Naive thymus-derived CD4-positive, alpha-beta T cell (primary cell): ENCODE measurements at regions of chr1 and their contacts with region 1.

Region 1: DNA sequence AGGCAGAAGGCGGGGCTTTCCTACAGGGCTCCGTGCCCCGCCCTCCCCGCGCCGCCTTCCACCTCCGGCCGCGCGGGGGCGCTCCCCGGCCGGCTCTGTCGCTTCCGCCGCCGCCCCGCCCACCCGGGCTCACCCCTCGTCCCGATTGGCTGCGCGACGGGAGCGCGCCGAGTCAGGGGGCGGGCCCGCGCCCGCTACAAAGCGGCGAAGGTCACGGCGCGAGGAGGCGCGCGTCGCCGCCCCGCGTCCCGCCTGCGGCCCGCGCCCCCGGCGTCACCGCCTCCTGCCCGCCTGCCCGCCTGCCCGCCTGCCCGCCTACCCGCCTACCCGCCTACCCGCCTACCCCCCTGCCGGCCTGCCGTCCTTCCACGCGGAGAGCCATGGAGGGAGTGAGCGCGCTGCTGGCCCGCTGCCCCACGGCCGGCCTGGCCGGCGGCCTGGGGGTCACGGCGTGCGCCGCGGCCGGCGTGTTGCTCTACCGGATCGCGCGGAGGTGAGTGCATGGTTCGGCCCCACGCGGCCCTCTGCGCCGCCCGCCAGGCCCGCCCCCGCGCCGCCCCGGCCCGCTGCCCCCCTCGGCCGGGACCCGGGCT is at the start of gene TMEM201:
- DNase-seq: peak; percentile 88 to 98 (median 93)
- ATAC-seq: peak; percentile 98
- H3K4me3 ChIP-seq: peak within 1 kb of the TSS; percentile 51
- H3K4me3 Mint-ChIP-seq: peak within 1 kb of the TSS; percentile 78 to 93 (median 86)
- H3K27ac ChIP-seq: peak within 1 kb of the TSS; percentile 69
- H3K27ac Mint-ChIP-seq: peak within 1 kb of the TSS; percentile 43 to 93 (median 65)
- H3K4me1 ChIP-seq: peaks cover 11 to 22% of the 10 kb centered on the region in 2 donors
- H3K4me1 Mint-ChIP-seq: peaks cover 20 to 37% (median 32%) of the 10 kb centered on the region in 7 donors
- H3K27me3 ChIP-seq: no peaks in the 10 kb centered on the region
- H3K27me3 Mint-ChIP-seq: no peaks in the 10 kb centered on the region
- total RNA-seq, gene TMEM201: 9.0 to 18.5 (median 10.0) TPM

Region 2: DNA sequence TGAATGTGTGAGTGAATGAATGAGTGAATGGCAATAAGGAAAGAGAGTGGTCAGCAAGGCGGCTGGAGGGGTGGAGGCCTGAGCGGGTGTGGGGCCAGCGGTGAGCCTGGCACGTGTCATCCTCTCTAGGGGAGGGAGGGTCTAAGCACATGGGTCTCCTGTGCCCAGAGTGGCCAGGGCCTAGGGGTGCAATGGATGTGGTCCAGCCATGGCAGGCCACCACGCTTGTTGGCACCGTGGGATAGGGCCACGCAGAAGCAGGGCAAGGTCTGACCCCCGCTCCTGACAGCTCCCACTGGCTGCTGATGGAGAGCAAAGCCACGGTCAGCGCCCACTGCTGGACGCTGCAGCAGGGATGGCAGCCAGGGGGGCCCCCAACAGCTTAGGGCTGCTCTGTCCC is 315.5 kb before region 1 on chr1:
- CTCF ChIA-PET with region 1: no interaction called
- POLR2A ChIA-PET with region 1: no interaction called
- intact Hi-C with region 1: no loop called
- DNase-seq: no peak
- ATAC-seq: no peak
- H3K4me3 ChIP-seq: no peak overlapping the region
- H3K4me3 Mint-ChIP-seq: no peak overlapping the region
- H3K27ac ChIP-seq: no peak overlapping the region
- H3K27ac Mint-ChIP-seq: no peak overlapping the region
- H3K4me1 ChIP-seq: peaks cover 0 to 11% of the 10 kb centered on the region in 2 donors
- H3K4me1 Mint-ChIP-seq: peaks cover 0 to 17% (median 0%) of the 10 kb centered on the region in 7 donors
- H3K27me3 ChIP-seq: no peaks in the 10 kb centered on the region
- H3K27me3 Mint-ChIP-seq: no peaks in the 10 kb centered on the region

Region 3: GRCh38 chr1:9292361-9293240 is 296.0 kb before region 1 on chr1 and contains the start of gene SPSB1:
- CTCF ChIA-PET with region 1: no interaction called
- POLR2A ChIA-PET with region 1: no interaction called
- intact Hi-C with region 1: loop called (anchors 5 to 10 kb)
- DNase-seq: peak; percentile 30 to 66 (median 56)
- ATAC-seq: peak; percentile 81
- H3K4me3 ChIP-seq: peak within 1 kb of the TSS; percentile 55
- H3K4me3 Mint-ChIP-seq: peak within 1 kb of the TSS; percentile 34 to 86 (median 66)
- H3K27ac ChIP-seq: peak within 1 kb of the TSS; percentile 27
- H3K27ac Mint-ChIP-seq: peak within 1 kb of the TSS in 8 of 9 donors; percentile 21 to 81 (median 52)
- H3K4me1 ChIP-seq: peaks cover 6 to 19% of the 10 kb centered on the region in 2 donors
- H3K4me1 Mint-ChIP-seq: peaks cover 6 to 40% (median 32%) of the 10 kb centered on the region in 7 donors
- H3K27me3 ChIP-seq: no peaks in the 10 kb centered on the region
- H3K27me3 Mint-ChIP-seq: no peaks in the 10 kb centered on the region
- total RNA-seq, gene SPSB1: 1.8 to 10.3 (median 1.9) TPM

Region 4: DNA sequence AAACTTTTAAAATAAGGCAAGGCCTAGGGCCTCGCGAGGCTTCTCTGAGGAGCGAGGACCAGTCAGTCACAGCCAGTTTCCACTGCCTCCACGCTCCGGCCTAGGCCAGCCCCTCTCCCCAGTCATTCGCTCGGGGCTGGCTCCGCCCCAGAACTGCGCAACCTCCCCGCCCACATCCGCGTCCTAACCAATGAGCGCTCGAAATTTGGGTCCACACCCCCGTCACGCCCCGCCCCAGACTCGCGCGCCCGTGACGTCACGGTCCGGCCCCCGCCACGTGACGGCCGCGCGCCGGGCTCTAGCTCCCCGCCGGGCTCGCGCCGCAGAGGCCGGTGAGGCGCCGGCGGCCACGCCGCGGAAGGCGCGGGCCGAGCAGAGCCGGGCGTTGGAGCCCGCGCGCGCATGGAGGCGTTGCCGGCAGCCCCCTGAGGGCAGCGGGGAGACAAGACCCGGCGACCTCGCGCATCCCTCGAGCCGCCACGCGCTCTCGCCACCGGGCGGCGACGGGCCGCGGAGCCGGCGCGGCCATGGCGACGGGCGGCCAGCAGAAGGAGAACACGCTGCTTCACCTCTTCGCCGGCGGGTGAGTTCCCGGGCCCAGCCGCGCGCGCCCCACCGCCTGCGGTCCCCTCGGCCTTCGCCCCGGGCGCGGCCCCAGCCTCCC is 49.4 kb before region 1 on chr1 and contains the start of gene SLC25A33:
- CTCF ChIA-PET with region 1: no interaction called
- POLR2A ChIA-PET with region 1: interaction called, 3 read pairs
- intact Hi-C with region 1: loop called (anchors 1 kb)
- DNase-seq: peak; percentile 92 to 99 (median 95)
- ATAC-seq: peak; percentile 99
- H3K4me3 ChIP-seq: peak within 1 kb of the TSS; percentile 58
- H3K4me3 Mint-ChIP-seq: peak within 1 kb of the TSS; percentile 86 to 93 (median 90)
- H3K27ac ChIP-seq: peak within 1 kb of the TSS; percentile 73
- H3K27ac Mint-ChIP-seq: peak within 1 kb of the TSS; percentile 85 to 97 (median 91)
- H3K4me1 ChIP-seq: peaks cover 5 to 8% of the 10 kb centered on the region in 2 donors
- H3K4me1 Mint-ChIP-seq: peaks cover 18 to 38% (median 31%) of the 10 kb centered on the region in 7 donors
- H3K27me3 ChIP-seq: no peaks in the 10 kb centered on the region
- H3K27me3 Mint-ChIP-seq: no peaks in the 10 kb centered on the region
- total RNA-seq, gene SLC25A33: 2.5 to 5.8 (median 3.9) TPM

Region 5: GRCh38 chr1:9651565-9652378 is 63.1 kb after region 1 on chr1 and contains the start of gene PIK3CD:
- CTCF ChIA-PET with region 1: no interaction called
- POLR2A ChIA-PET with region 1: no interaction called
- intact Hi-C with region 1: loop called in 1 of 2 experiments (anchors 2 kb)
- DNase-seq: peak in 6 of 9 donors; percentile 14 to 59 (median 32)
- ATAC-seq: peak; percentile 49
- H3K4me3 ChIP-seq: peak within 1 kb of the TSS; percentile 84
- H3K4me3 Mint-ChIP-seq: peak within 1 kb of the TSS; percentile 96 to 100 (median 99)
- H3K27ac ChIP-seq: peak within 1 kb of the TSS; percentile 79
- H3K27ac Mint-ChIP-seq: peak within 1 kb of the TSS; percentile 95 to 99 (median 98)
- H3K4me1 ChIP-seq: peaks cover 27 to 46% of the 10 kb centered on the region in 2 donors
- H3K4me1 Mint-ChIP-seq: peaks cover 26 to 70% (median 61%) of the 10 kb centered on the region in 7 donors
- H3K27me3 ChIP-seq: no peaks in the 10 kb centered on the region
- H3K27me3 Mint-ChIP-seq: no peaks in the 10 kb centered on the region
- total RNA-seq, gene PIK3CD: 269 to 313 (median 283) TPM

Region 6: GRCh38 chr1:9724706-9725476 is 136.2 kb after region 1 on chr1:
- CTCF ChIA-PET with region 1: no interaction called
- POLR2A ChIA-PET with region 1: no interaction called
- intact Hi-C with region 1: loop called in 1 of 2 experiments (anchors 2 kb)
- DNase-seq: peak; percentile 58 to 72 (median 64)
- ATAC-seq: peak; percentile 65
- H3K4me3 ChIP-seq: no peak overlapping the region
- H3K4me3 Mint-ChIP-seq: peak overlapping the region in 8 of 10 donors; percentile 14 to 68 (median 62)
- H3K27ac ChIP-seq: peak overlapping the region; percentile 51
- H3K27ac Mint-ChIP-seq: peak overlapping the region; percentile 73 to 88 (median 80)
- H3K4me1 ChIP-seq: peaks cover 36 to 83% of the 10 kb centered on the region in 2 donors
- H3K4me1 Mint-ChIP-seq: peaks cover 38 to 84% (median 60%) of the 10 kb centered on the region in 7 donors
- H3K27me3 ChIP-seq: no peaks in the 10 kb centered on the region
- H3K27me3 Mint-ChIP-seq: no peaks in the 10 kb centered on the region

Region 7: GRCh38 chr1:9910425-9911178 is 322.0 kb after region 1 on chr1:
- CTCF ChIA-PET with region 1: no interaction called
- POLR2A ChIA-PET with region 1: no interaction called
- intact Hi-C with region 1: loop called in 1 of 2 experiments (anchors 2 kb)
- DNase-seq: peak; percentile 99 to 100 (median 100)
- ATAC-seq: peak; percentile 95
- H3K4me3 ChIP-seq: peak overlapping the region; percentile 89
- H3K4me3 Mint-ChIP-seq: peak overlapping the region; percentile 88 to 98 (median 96)
- H3K27ac ChIP-seq: peak overlapping the region; percentile 75
- H3K27ac Mint-ChIP-seq: peak overlapping the region; percentile 84 to 98 (median 97)
- H3K4me1 ChIP-seq: peaks cover 13 to 15% of the 10 kb centered on the region in 2 donors
- H3K4me1 Mint-ChIP-seq: peaks cover 25 to 43% (median 31%) of the 10 kb centered on the region in 7 donors
- H3K27me3 ChIP-seq: no peaks in the 10 kb centered on the region
- H3K27me3 Mint-ChIP-seq: peaks cover 0 to 10% (median 0%) of the 10 kb centered on the region in 5 donors